ENCODE measurements at regions of chr11 and their contacts with region 1.

Region 1: GRCh38 chr11:114026355-114026754 is 33.2 kb upstream of the ZBTB16 start:
- DNase-seq: no peak
- ATAC-seq: peak in 1 of 8 donors; percentile 7
- H3K4me3 ChIP-seq: no peak overlapping the region
- H3K27ac ChIP-seq: no peak overlapping the region
- H3K4me1 ChIP-seq: peaks cover 0 to 12% (median 0%) of the 10 kb centered on the region in 9 donors
- H3K27me3 ChIP-seq: no peaks in the 10 kb centered on the region
- CTCF ChIP-seq: no peak

Region 2: DNA sequence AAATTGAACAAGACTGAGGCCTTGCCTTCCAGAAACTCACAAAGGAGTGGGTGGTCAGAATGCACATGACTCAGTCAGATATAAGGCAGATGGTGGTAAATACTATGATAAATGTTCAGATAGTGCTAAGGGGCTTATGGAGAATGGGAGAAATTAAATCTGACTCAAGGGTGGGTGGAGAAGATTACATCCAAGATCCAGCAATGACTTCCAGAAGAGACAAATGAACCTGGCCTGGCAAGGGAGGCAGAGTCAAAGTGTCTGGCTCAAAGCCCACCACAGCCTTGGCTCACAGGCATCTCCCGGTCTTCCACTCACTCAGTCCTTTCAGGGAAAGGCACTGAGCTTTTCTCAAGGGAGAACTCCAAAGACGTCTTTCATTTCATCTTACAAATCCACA is 27.1 kb after region 1 on chr11:
- intact Hi-C with region 1: loop called in 1 of 10 experiments (anchors 2 kb)
- DNase-seq: no peak
- ATAC-seq: no peak
- H3K4me3 ChIP-seq: no peak overlapping the region
- H3K27ac ChIP-seq: no peak overlapping the region
- H3K4me1 ChIP-seq: peaks cover 0 to 33% (median 15%) of the 10 kb centered on the region in 9 donors
- H3K27me3 ChIP-seq: peaks cover 0 to 18% (median 0%) of the 10 kb centered on the region in 7 donors
- CTCF ChIP-seq: no peak

Measured in heart right ventricle (tissue), 16 donors.